Endothelial cell of umbilical vein (primary cell): ENCODE measurements at regions of chr5 and their contacts with region 1.

Region 1: GRCh38 chr5:55923177-55923771 is 71.5 kb downstream of the IL6ST start:
- DNase-seq: peak; percentile 87
- H3K4me3 ChIP-seq: peak overlapping the region in 2 of 3 experiments; percentile 10 to 26
- H3K27ac ChIP-seq: peak overlapping the region; percentile 89
- H3K4me1 ChIP-seq: peaks cover 38% of the 10 kb centered on the region
- H3K27me3 ChIP-seq: no peaks in the 10 kb centered on the region
- CTCF ChIP-seq: no peak
- POLR2A ChIP-seq: peak; percentile 81

Region 2: DNA sequence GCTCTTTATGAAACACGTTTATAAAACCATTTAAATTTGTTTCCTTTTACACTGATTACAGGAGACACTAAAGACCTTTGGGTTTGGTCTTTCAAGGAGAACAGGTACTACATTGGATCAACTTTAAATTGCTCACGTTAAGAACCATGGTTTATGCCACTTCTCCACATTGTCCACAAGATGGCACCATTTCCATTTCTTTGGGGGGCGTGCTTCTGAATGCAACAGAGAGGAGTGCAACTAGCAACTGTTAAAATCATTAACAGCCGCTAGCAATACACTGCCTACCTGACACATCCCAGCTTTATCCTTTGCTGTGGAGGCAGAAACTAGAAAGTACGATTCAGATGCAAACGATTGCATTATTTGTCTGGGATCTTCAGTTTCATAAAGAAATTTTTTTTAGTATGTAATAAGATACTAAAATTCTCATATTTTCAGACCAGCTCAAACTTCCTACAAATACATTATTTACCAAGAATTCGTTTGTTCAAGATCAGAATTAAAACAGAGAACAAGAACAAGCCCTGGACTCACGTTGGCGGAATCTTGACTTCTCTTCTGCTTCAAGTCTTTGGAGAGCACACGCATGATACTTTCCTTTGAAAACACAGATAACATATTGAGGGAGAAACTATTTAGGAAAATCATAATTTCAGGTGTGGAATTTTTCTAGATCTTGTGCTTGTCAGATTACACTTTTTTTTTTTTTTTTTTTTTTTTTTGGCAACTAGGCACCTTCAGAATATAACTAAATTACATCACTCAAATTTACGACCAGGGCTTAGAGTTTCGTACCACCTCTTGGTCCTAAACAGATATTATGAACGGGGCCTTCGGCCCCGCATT is 751.0 kb before region 1 on chr5:
- CTCF ChIA-PET with region 1: no interaction called
- POLR2A ChIA-PET with region 1: no interaction called
- dilution Hi-C with region 1: no loop called
- intact Hi-C with region 1: loop called (anchors 5 kb)
- DNase-seq: peak; percentile 79
- H3K4me3 ChIP-seq: peak overlapping the region in 2 of 3 experiments; percentile 28 to 46
- H3K27ac ChIP-seq: no peak overlapping the region
- H3K4me1 ChIP-seq: peaks cover 21% of the 10 kb centered on the region
- H3K27me3 ChIP-seq: peaks cover 31 to 39% of the 10 kb centered on the region in 2 experiments
- CTCF ChIP-seq: peak; percentile 60 to 70
- POLR2A ChIP-seq: no peak

Region 3: DNA sequence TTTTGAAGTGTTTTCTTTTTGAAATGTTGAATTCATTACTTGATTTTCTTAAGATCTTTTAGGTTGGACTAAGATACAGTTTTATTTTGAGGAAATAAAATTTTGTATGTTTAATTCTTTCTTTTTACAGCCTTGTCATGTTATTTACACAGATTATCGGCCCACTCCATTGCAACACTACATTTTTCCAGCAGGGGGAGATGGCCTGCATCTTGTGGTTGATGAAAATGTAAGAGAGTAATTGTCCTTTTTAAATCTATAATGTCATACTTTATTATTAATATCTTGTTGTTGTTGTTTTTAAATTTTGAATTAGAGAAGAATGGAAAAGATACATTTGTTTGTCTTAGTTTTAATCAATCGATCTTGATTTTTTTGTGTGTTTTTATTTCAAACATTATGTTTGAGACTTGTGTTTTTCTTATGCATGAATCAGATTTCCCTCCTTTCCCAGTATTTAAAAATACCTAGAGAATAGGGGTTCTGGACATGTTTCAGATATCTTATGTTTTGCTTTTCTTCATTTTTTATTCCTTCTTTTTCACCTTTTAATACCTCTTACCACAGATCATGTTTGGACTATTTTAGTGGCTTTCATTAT is 578.8 kb before region 1 on chr5:
- CTCF ChIA-PET with region 1: no interaction called
- POLR2A ChIA-PET with region 1: no interaction called
- dilution Hi-C with region 1: no loop called
- intact Hi-C with region 1: loop called (anchors 1 kb)
- DNase-seq: peak; percentile 86
- H3K4me3 ChIP-seq: no peak overlapping the region
- H3K27ac ChIP-seq: no peak overlapping the region
- H3K4me1 ChIP-seq: peaks cover 3% of the 10 kb centered on the region
- H3K27me3 ChIP-seq: no peaks in the 10 kb centered on the region
- CTCF ChIP-seq: peak; percentile 57 to 66
- POLR2A ChIP-seq: no peak

Region 4: GRCh38 chr5:55534436-55535198 is 388.7 kb before region 1 on chr5 and contains the start of gene PLPP1:
- CTCF ChIA-PET with region 1: no interaction called
- POLR2A ChIA-PET with region 1: no interaction called
- dilution Hi-C with region 1: no loop called
- intact Hi-C with region 1: loop called (anchors 10 kb)
- DNase-seq: peak; percentile 92
- H3K4me3 ChIP-seq: peak within 1 kb of the TSS; percentile 60 to 82 (median 64)
- H3K27ac ChIP-seq: peak within 1 kb of the TSS; percentile 79
- H3K4me1 ChIP-seq: peaks cover 11% of the 10 kb centered on the region
- H3K27me3 ChIP-seq: no peaks in the 10 kb centered on the region
- CTCF ChIP-seq: no peak
- POLR2A ChIP-seq: peak; percentile 85
- total RNA-seq, gene PLPP1: 14.3 and 14.6 TPM in 2 replicates

Region 5: DNA sequence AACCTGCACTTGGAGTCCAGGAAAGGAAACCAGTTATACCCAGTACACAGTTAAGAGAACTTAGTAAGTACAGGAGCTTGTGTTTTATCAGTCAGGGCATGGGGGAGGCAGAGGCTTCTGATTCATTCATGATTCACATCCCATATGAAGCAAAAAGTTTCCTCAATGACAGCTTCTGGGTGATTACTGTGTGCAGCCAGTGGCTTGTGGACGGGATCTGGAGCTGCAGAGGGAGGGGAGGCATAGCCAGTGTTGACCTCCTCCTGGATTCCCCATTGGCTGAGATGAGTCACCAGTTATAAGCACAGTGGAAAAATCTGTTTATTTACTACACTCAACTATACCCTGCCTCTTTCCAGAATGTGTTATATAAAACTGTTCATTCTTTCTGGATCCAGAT is 54.4 kb before region 1 on chr5:
- CTCF ChIA-PET with region 1: interaction called, 5 read pairs
- POLR2A ChIA-PET with region 1: interaction called, 4 read pairs
- dilution Hi-C with region 1: no loop called
- intact Hi-C with region 1: loop called (anchors 2 kb)
- DNase-seq: peak; percentile 99
- H3K4me3 ChIP-seq: no peak overlapping the region
- H3K27ac ChIP-seq: peak overlapping the region; percentile 85
- H3K4me1 ChIP-seq: peaks cover 19% of the 10 kb centered on the region
- H3K27me3 ChIP-seq: no peaks in the 10 kb centered on the region
- CTCF ChIP-seq: no peak
- POLR2A ChIP-seq: no peak

Region 6: DNA sequence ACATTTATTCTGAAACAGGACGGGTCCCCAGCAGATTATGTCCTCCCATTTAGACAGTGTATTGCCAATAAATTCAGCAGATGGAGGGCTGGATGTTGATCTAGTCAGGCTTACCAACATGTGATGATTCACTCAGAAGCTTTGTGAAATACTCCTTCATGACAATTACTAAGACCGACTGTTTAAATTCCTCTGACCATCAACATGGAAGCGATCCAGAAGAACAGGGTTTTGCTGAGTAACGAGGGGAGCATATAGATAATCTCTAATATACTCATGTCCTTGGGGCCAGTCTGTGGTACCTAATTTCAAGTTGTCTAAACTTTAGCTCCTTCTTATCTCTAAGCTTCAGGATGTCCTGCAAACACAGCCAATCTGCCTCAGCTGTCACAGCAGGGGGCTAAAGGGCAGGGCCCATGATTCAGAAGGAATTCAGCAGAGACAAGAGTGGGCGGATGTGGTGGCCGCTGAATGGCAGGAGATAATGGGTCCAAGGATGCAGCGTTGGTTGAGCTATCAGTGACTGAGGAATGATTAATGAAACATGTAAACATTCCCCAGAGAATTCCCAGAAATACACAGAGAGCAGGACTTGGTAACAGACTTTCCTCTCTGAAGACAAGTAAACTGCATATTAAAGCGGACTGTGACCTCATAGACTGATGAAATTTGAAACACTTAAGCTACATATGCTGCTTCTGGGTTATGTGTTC is 200.4 kb after region 1 on chr5:
- CTCF ChIA-PET with region 1: no interaction called
- POLR2A ChIA-PET with region 1: no interaction called
- dilution Hi-C with region 1: no loop called
- intact Hi-C with region 1: loop called (anchors 1 kb)
- DNase-seq: peak; percentile 99
- H3K4me3 ChIP-seq: peak overlapping the region in 1 of 3 experiments; percentile 33
- H3K27ac ChIP-seq: peak overlapping the region; percentile 83
- H3K4me1 ChIP-seq: peaks cover 40% of the 10 kb centered on the region
- H3K27me3 ChIP-seq: no peaks in the 10 kb centered on the region
- CTCF ChIP-seq: no peak
- POLR2A ChIP-seq: peak; percentile 74